Activated CD8-positive, alpha-beta memory T cell treated with anti-CD3 and anti-CD28 coated beads, Interleukin-2, amount 10 ng/mL, durations not matched to agents 7 days and 5 days (primary cell): ENCODE measurements at regions of chr11 and their contacts with region 1.

Region 1: GRCh38 chr11:48001438-48002021 is 21.2 kb downstream of the PTPRJ start:
- DNase-seq: peak; percentile 96
- ATAC-seq: peak; percentile 88
- H3K4me3 Mint-ChIP-seq: peak overlapping the region; percentile 59
- H3K27ac Mint-ChIP-seq: peak overlapping the region; percentile 98
- H3K4me1 Mint-ChIP-seq: peaks cover 88% of the 10 kb centered on the region
- H3K27me3 Mint-ChIP-seq: no peaks in the 10 kb centered on the region

Region 2: DNA sequence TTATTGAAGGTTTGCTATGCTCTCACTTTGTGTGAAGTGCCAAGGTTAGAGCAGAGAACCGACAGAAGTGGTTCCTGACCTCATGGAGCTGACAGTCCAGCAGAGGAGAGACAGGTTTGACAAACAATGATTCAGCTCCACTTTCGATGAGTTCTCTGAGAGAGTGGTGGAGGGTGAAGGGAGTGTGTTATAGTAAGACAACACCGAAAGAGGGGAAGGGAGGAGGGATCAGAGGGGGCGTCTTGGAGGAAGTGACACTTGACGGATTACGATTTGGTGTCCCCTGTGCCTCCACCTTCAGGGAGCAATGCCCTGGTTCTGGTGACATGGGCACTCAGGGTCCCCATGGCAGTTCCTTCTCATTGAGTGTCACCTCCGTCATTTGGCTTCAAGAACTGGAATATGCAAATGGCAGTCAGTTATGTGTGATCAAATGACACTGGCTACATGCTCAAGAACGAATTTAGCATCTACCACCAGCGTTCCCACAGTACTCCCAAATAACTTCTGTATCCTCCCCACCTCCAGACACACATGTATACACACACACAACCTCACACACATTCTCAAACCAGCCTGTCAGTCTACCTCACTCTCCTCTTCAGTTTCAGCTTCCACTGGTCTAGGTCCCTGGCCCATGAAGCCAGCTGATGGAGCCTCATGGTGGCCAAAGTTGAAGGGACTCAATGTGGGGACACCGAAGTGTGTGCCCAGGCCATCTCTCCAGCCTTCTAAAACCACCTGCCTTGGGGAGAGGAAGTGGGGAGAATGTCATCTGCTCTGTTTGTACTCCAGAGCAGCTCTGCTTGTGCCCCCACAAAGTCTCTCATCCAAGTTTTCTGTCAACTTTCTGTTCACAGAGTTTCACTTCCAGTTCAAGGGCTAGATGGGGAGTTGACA is 122.0 kb before region 1 on chr11:
- CTCF ChIA-PET with region 1: no interaction called
- DNase-seq: no peak
- ATAC-seq: no peak
- H3K4me3 Mint-ChIP-seq: no peak overlapping the region
- H3K27ac Mint-ChIP-seq: no peak overlapping the region
- H3K4me1 Mint-ChIP-seq: peaks cover 5% of the 10 kb centered on the region
- H3K27me3 Mint-ChIP-seq: peaks cover 3% of the 10 kb centered on the region

Region 3: GRCh38 chr11:47941907-47942558 is 59.5 kb before region 1 on chr11:
- CTCF ChIA-PET with region 1: no interaction called
- DNase-seq: no peak
- ATAC-seq: no peak
- H3K4me3 Mint-ChIP-seq: no peak overlapping the region
- H3K27ac Mint-ChIP-seq: no peak overlapping the region
- H3K4me1 Mint-ChIP-seq: peaks cover 25% of the 10 kb centered on the region
- H3K27me3 Mint-ChIP-seq: no peaks in the 10 kb centered on the region

Region 4: GRCh38 chr11:47981050-47981621 is 20.4 kb before region 1 on chr11:
- CTCF ChIA-PET with region 1: interaction called, 19 read pairs
- DNase-seq: peak; percentile 55
- ATAC-seq: peak; percentile 57
- H3K4me3 Mint-ChIP-seq: peak overlapping the region; percentile 97
- H3K27ac Mint-ChIP-seq: peak overlapping the region; percentile 92
- H3K4me1 Mint-ChIP-seq: peaks cover 34% of the 10 kb centered on the region
- H3K27me3 Mint-ChIP-seq: peaks cover 8% of the 10 kb centered on the region

Region 5: DNA sequence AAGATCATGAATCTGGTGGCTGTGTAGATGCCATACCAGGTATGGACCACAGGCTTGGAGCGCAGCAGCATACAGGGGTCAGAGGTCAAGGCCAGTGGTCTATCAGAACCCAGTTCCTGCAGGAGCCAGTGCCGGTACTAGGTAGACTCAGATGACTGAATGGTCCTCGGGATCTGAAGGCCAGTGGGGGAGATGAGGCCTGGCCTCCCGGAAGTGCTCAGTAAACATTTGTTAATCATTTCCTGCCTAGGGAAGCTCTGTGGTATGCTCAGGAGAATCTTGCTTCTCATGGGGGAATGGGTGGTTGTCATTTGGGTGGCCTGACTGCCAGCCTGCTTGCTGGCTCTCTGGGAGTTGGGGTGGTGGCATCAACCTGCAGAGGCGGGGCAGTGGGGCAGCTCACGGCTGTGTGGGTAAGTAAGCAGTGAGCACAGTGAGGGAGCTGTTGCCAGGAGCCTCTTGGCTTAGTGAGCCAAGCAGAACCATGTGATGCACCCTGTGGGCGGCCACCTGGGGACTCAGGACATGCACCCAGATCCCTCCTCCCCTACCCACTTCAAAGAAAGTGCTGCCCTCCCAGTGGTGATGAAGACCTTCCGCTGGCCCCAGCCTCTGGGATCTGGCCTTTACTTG is 11.9 kb after region 1 on chr11:
- CTCF ChIA-PET with region 1: interaction called, 31 read pairs
- DNase-seq: peak; percentile 84
- ATAC-seq: peak; percentile 52
- H3K4me3 Mint-ChIP-seq: peak overlapping the region; percentile 49
- H3K27ac Mint-ChIP-seq: peak overlapping the region; percentile 98
- H3K4me1 Mint-ChIP-seq: peaks cover 90% of the 10 kb centered on the region
- H3K27me3 Mint-ChIP-seq: no peaks in the 10 kb centered on the region

Region 6: DNA sequence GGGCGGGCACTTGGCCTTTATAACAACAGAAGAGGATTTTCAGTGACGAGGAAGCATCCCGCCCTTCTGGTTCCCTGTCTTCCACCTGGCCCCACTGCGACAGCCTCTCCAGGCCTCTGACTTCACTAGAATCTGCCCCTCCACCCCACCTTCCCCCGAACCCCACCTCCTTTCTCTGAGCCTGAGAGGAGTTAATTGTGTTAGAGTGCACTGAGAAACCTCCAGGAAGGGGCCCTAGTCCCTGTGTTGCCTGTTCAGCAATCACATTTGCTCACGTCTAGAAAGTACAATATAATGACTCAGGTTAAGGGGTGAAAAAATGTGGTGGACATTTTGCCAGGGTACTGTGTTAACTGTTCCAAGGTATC is 17.7 kb after region 1 on chr11:
- CTCF ChIA-PET with region 1: interaction called, 31 read pairs
- DNase-seq: no peak
- ATAC-seq: peak; percentile 39
- H3K4me3 Mint-ChIP-seq: peak overlapping the region; percentile 8
- H3K27ac Mint-ChIP-seq: peak overlapping the region; percentile 85
- H3K4me1 Mint-ChIP-seq: peaks cover 77% of the 10 kb centered on the region
- H3K27me3 Mint-ChIP-seq: no peaks in the 10 kb centered on the region

Region 7: GRCh38 chr11:48055292-48056132 is 54.0 kb after region 1 on chr11:
- CTCF ChIA-PET with region 1: interaction called, 30 read pairs
- DNase-seq: peak; percentile 93
- ATAC-seq: peak; percentile 92
- H3K4me3 Mint-ChIP-seq: peak overlapping the region; percentile 65
- H3K27ac Mint-ChIP-seq: peak overlapping the region; percentile 94
- H3K4me1 Mint-ChIP-seq: peaks cover 83% of the 10 kb centered on the region
- H3K27me3 Mint-ChIP-seq: no peaks in the 10 kb centered on the region